Panc1 (cell line): ENCODE measurements at regions of chr2 and their contacts with region 1.

Region 1: DNA sequence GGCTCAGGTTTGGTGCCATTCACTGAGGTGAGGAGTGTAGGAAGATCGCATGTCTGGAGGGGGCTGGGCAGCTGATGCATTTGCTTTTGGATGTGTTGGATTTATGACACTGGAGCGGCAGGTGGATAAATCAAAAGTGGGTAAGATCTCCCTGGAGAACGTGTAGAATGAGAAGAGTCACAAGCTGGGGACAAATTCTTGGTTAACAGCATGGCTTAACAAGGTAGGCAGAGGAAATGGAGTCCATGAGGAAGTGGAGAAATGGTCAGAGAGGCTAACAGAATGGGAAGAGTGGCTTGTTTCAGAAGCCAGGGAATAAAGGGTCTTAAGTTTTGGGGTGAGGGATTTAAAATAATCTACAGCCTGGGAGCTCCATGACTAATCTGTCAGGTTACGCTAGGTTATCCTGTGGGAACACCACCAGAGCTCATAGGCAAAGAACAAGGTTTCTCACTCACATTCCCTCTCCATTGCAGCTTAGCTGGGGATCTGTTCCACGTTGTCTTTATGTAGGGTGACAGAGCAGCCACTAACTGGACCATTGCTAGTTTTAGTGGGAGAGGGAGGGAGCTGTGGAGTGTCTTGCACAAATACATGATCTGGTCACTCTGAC is 12.8 kb downstream of the TSN start:
- DNase-seq: no peak
- ATAC-seq: no peak
- H3K4me3 ChIP-seq: no peak overlapping the region
- H3K27ac ChIP-seq: no peak overlapping the region
- H3K4me1 ChIP-seq: no peaks in the 10 kb centered on the region
- H3K27me3 ChIP-seq: no peaks in the 10 kb centered on the region
- CTCF ChIP-seq: no peak

Region 2: GRCh38 chr2:121400201-121400600 is 368.0 kb before region 1 on chr2:
- CTCF ChIA-PET with region 1: interaction called, 12 read pairs
- POLR2A ChIA-PET with region 1: no interaction called
- in situ Hi-C with region 1: no loop called
- intact Hi-C with region 1: no loop called
- DNase-seq: no peak
- ATAC-seq: no peak
- H3K4me3 ChIP-seq: no peak overlapping the region
- H3K27ac ChIP-seq: no peak overlapping the region
- H3K4me1 ChIP-seq: no peaks in the 10 kb centered on the region
- H3K27me3 ChIP-seq: no peaks in the 10 kb centered on the region
- CTCF ChIP-seq: no peak

Region 3: DNA sequence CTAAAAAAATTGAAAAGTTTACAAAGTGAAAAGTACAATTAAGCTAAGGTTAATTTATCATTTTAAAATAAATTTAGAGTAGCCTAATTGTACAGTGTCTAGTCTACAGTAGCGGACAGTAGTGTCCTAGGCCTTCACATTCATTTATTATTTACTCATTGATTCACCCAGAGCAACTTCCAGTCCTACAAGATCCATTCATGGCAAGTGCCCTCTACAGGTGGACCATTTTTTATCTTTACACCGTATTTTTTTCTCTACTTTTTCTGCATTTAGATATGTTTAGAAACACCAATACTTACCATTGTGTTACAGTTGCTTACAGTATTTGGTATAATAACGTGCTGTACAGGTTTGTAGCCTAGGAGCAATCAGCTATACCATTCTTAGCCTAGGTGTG is 71.3 kb after region 1 on chr2:
- CTCF ChIA-PET with region 1: no interaction called
- POLR2A ChIA-PET with region 1: no interaction called
- in situ Hi-C with region 1: no loop called
- intact Hi-C with region 1: no loop called
- DNase-seq: no peak
- ATAC-seq: no peak
- H3K4me3 ChIP-seq: no peak overlapping the region
- H3K27ac ChIP-seq: no peak overlapping the region
- H3K4me1 ChIP-seq: no peaks in the 10 kb centered on the region; the same call in 1 of the 2 replicates
- H3K27me3 ChIP-seq: peaks cover 11% of the 10 kb centered on the region
- CTCF ChIP-seq: no peak